ENCODE measurements at regions of chr9 and their contacts with region 1.

Region 1: GRCh38 chr9:15021146-15021545 is 110.9 kb upstream of the FREM1 start:
- DNase-seq: no peak
- ATAC-seq: no peak
- H3K4me3 ChIP-seq: no peak overlapping the region
- H3K27ac ChIP-seq: no peak overlapping the region
- H3K4me1 ChIP-seq: no peaks in the 10 kb centered on the region
- H3K27me3 ChIP-seq: no peaks in the 10 kb centered on the region
- CTCF ChIP-seq: no peak
- EP300 ChIP-seq: no peak
- POLR2A ChIP-seq: no peak
- RAD21 ChIP-seq: no peak

Region 2: DNA sequence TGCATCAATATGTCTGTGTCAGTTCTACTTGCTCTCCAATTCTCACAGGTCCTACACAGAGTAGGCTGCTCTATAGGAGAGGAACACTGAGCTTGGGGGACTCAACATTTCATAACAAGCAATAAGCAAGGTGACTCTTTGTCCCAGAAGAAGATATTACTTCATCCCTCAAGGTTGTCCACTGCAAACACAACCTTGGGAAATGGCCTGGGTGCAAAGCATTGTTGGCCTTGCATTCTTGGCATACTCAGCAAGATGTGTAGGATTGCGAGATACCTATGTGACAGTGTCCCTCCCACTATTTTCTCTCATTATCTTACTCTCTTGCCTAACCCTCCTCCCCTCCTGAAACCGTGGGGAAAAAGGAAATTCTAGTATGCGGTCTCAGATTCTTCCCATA is 58.8 kb after region 1 on chr9:
- CTCF ChIA-PET with region 1: no interaction called
- POLR2A ChIA-PET with region 1: no interaction called
- RAD21 ChIA-PET with region 1: no interaction called
- SMC1A ChIA-PET with region 1: no interaction called
- in situ Hi-C with region 1: no loop called
- intact Hi-C with region 1: loop called (anchors 5 kb)
- DNase-seq: no peak
- ATAC-seq: no peak
- H3K4me3 ChIP-seq: no peak overlapping the region
- H3K27ac ChIP-seq: no peak overlapping the region
- H3K4me1 ChIP-seq: no peaks in the 10 kb centered on the region
- H3K27me3 ChIP-seq: no peaks in the 10 kb centered on the region; a peak in 1 of 4 replicates
- CTCF ChIP-seq: no peak
- EP300 ChIP-seq: no peak
- POLR2A ChIP-seq: no peak
- RAD21 ChIP-seq: no peak